Motor neuron (in vitro differentiated cells): ENCODE measurements at regions of chr3 and their contacts with region 1.

Region 1: GRCh38 chr3:19543212-19543841 is 390.7 kb downstream of the EFHB start:
- ATAC-seq: peak in 5 of 8 experiments; percentile 44 to 93 (median 59)
- H3K4me3 ChIP-seq: no peak overlapping the region
- H3K27ac ChIP-seq: no peak overlapping the region
- H3K4me1 ChIP-seq: no peaks in the 10 kb centered on the region

Region 2: GRCh38 chr3:19065027-19065426 is 478.3 kb before region 1 on chr3:
- in situ Hi-C with region 1: loop called in 1 of 9 experiments (anchors 25 kb)
- ATAC-seq: peak in 6 of 8 experiments; percentile 21 to 62 (median 40)
- H3K4me3 ChIP-seq: no peak overlapping the region
- H3K27ac ChIP-seq: no peak overlapping the region
- H3K4me1 ChIP-seq: no peaks in the 10 kb centered on the region

Region 3: GRCh38 chr3:19331931-19332330 is 211.4 kb before region 1 on chr3:
- in situ Hi-C with region 1: no loop called
- ATAC-seq: no peak
- H3K4me3 ChIP-seq: no peak overlapping the region
- H3K27ac ChIP-seq: no peak overlapping the region
- H3K4me1 ChIP-seq: no peaks in the 10 kb centered on the region

Region 4: GRCh38 chr3:20574746-20575145 is 1031.4 kb after region 1 on chr3:
- in situ Hi-C with region 1: no loop called
- ATAC-seq: peak in 2 of 8 experiments; percentile 46 to 56
- H3K4me3 ChIP-seq: no peak overlapping the region
- H3K27ac ChIP-seq: no peak overlapping the region
- H3K4me1 ChIP-seq: no peaks in the 10 kb centered on the region